ENCODE measurements at regions of chr2 and their contacts with region 1.

Region 1: DNA sequence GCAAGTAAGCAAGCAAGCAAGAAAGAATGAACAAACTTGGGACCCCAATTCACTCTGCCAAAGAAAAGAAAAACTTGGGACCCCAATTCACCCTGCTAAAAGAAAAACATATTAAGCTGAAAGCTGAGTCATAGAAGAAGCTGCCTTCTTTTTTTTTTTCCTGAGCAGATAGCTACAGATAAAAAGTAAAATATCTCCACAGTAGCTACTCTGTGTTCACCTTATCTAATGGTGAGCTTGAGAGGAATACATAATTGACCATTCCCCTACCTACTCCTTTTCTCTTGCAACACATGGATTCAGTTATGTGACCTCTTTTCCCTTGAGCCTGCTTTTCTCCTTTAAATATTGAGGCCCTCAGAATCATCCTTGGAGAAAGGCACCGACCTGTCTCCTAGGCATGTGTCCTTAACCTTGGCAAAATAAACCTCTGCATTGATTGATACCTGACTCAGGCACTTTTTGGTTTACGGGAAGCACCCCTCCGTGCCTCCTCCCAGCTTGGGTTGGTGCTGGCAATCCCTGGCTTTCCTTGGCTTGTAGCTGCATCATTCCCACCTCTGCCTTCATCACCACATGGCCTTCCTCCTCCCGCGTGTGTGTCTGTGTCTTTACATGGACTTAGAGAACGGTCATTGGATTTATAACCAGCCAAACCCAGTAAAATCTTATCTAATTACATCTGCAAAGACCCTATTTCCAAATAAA is 62.9 kb downstream of the MCFD2 start:
- DNase-seq: no peak
- H3K4me3 ChIP-seq: no peak overlapping the region
- H3K4me3 Mint-ChIP-seq: no peak overlapping the region
- H3K27ac ChIP-seq: peak overlapping the region; percentile 9
- H3K27ac Mint-ChIP-seq: peak overlapping the region in 1 of 8 donors; percentile 57
- H3K4me1 ChIP-seq: no peaks in the 10 kb centered on the region
- H3K4me1 Mint-ChIP-seq: no peaks in the 10 kb centered on the region
- H3K27me3 ChIP-seq: no peaks in the 10 kb centered on the region
- H3K27me3 Mint-ChIP-seq: peaks cover 4 to 16% of the 10 kb centered on the region in 2 donors

Region 2: DNA sequence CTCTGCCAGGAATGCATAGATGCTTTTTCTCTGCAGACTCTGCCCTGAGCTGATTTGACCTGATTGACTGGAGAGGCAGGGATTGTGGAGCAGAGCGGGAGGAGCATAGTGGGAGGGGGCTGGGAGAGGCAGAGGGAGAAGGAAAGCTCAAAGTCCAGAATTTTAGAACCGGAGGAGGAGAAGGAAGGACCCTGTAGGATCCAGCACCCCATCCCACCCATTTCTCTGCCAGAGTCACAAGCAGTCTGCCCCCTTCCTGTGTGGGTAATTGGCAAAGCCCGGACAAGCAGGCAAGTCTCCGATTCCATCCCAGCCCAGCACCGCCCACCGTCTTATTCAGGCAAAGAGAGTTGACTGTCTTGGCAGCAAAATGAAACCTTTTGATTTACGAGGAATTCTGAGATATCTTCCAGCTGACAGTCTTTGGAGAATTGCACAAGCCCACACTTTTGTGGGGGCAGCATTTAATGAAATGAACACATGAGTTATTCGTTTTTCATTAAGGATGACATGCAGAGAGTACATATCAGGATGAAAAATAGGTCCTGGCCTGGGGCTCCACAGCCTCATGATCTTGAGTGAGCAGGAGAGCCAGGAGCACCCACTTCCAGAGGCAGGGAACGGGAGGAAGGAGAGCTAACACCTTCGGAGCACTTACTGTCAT is 40.3 kb before region 1 on chr2:
- CTCF ChIA-PET with region 1: no interaction called
- POLR2A ChIA-PET with region 1: no interaction called
- DNase-seq: no peak
- H3K4me3 ChIP-seq: no peak overlapping the region
- H3K4me3 Mint-ChIP-seq: no peak overlapping the region
- H3K27ac ChIP-seq: no peak overlapping the region
- H3K27ac Mint-ChIP-seq: no peak overlapping the region
- H3K4me1 ChIP-seq: no peaks in the 10 kb centered on the region
- H3K4me1 Mint-ChIP-seq: no peaks in the 10 kb centered on the region
- H3K27me3 ChIP-seq: no peaks in the 10 kb centered on the region
- H3K27me3 Mint-ChIP-seq: peaks cover 9 to 36% of the 10 kb centered on the region in 2 donors

Region 3: GRCh38 chr2:46825944-46826892 is 26.5 kb before region 1 on chr2:
- CTCF ChIA-PET with region 1: no interaction called
- POLR2A ChIA-PET with region 1: interaction called, 12 read pairs
- DNase-seq: no peak
- H3K4me3 ChIP-seq: no peak overlapping the region
- H3K4me3 Mint-ChIP-seq: no peak overlapping the region
- H3K27ac ChIP-seq: no peak overlapping the region
- H3K27ac Mint-ChIP-seq: no peak overlapping the region
- H3K4me1 ChIP-seq: no peaks in the 10 kb centered on the region
- H3K4me1 Mint-ChIP-seq: no peaks in the 10 kb centered on the region
- H3K27me3 ChIP-seq: no peaks in the 10 kb centered on the region
- H3K27me3 Mint-ChIP-seq: peaks cover 11 to 38% of the 10 kb centered on the region in 2 donors

Measured in CD8-positive, alpha-beta memory T cell (primary cell).